ENCODE measurements at regions of chrX and their contacts with region 1.

Region 1: DNA sequence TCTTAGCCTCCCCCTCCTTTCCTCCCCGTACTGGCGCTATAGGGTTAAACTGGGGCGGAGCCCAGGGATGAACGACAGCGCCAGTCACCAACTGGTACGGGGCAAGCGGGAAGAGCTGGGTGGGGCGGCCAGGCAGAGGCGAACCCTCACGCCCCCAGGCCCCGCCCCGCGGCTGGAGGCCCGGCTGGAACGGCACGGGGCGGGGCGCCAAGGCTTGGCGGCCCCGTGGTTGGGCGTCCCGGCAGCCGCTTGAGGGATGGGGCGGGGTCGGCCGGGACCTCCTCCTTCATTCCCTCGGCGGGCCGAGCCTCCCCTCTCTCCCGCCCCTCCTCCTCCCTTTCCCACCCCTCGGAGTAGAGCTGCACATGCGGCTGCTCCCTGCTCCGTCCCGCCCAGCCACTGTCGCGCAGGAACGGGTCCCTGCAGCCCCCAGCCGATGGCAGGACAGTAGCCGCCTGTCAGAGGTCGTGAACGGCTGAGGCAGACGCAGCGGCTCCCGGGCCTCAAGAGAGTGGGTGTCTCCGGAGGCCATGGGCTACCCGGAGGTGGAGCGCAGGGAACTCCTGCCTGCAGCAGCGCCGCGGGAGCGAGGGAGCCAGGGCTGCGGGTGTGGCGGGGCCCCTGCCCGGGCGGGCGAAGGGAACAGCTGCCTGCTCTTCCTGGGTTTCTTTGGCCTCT is at the start of gene EDA:
- DNase-seq: peak; percentile 90
- ATAC-seq: peak; percentile 98
- total RNA-seq, gene EDA: 13.7 to 17.5 TPM

Region 2: GRCh38 chrX:69538321-69538876 is 77.5 kb before region 1 on chrX:
- intact Hi-C with region 1: loop called in 1 of 2 experiments (anchors 5 kb)
- DNase-seq: peak; percentile 78
- ATAC-seq: peak; percentile 93 to 98

Region 3: GRCh38 chrX:70001269-70001668 is 385.4 kb after region 1 on chrX:
- intact Hi-C with region 1: loop called in 1 of 2 experiments (anchors 10 kb)
- DNase-seq: peak; percentile 47
- ATAC-seq: peak; percentile 80 to 88

Measured in left cardiac atrium (tissue), 4 donors.